T-cell (primary cell): ENCODE measurements at regions of chr7 and their contacts with region 1.

Region 1: GRCh38 chr7:25770670-25771069 is 381.3 kb upstream of the NFE2L3 start:
- DNase-seq: no peak
- ATAC-seq: no peak
- H3K4me3 ChIP-seq: no peak overlapping the region
- H3K4me3 Mint-ChIP-seq: no peak overlapping the region
- H3K27ac ChIP-seq: no peak overlapping the region
- H3K27ac Mint-ChIP-seq: no peak overlapping the region
- H3K4me1 ChIP-seq: no peaks in the 10 kb centered on the region
- H3K4me1 Mint-ChIP-seq: no peaks in the 10 kb centered on the region
- H3K27me3 ChIP-seq: peaks cover 0 to 2% of the 10 kb centered on the region in 2 experiments
- H3K27me3 Mint-ChIP-seq: peaks cover 5 to 9% of the 10 kb centered on the region in 2 donors

Region 2: GRCh38 chr7:25752967-25753791 is 17.5 kb before region 1 on chr7:
- CTCF ChIA-PET with region 1: no interaction called
- POLR2A ChIA-PET with region 1: interaction called in 1 of 2 experiments, 12 read pairs
- DNase-seq: no peak
- ATAC-seq: no peak
- H3K4me3 ChIP-seq: no peak overlapping the region
- H3K4me3 Mint-ChIP-seq: no peak overlapping the region
- H3K27ac ChIP-seq: no peak overlapping the region
- H3K27ac Mint-ChIP-seq: no peak overlapping the region
- H3K4me1 ChIP-seq: no peaks in the 10 kb centered on the region
- H3K4me1 Mint-ChIP-seq: no peaks in the 10 kb centered on the region
- H3K27me3 ChIP-seq: peaks cover 0 to 9% of the 10 kb centered on the region in 2 experiments
- H3K27me3 Mint-ChIP-seq: peaks cover 4 to 5% of the 10 kb centered on the region in 2 donors

Region 3: GRCh38 chr7:25877802-25878789 is 107.4 kb after region 1 on chr7:
- CTCF ChIA-PET with region 1: no interaction called
- POLR2A ChIA-PET with region 1: no interaction called
- DNase-seq: no peak
- ATAC-seq: no peak
- H3K4me3 ChIP-seq: no peak overlapping the region
- H3K4me3 Mint-ChIP-seq: no peak overlapping the region
- H3K27ac ChIP-seq: no peak overlapping the region
- H3K27ac Mint-ChIP-seq: no peak overlapping the region
- H3K4me1 ChIP-seq: no peaks in the 10 kb centered on the region
- H3K4me1 Mint-ChIP-seq: no peaks in the 10 kb centered on the region
- H3K27me3 ChIP-seq: peaks cover 8 to 17% of the 10 kb centered on the region in 2 experiments
- H3K27me3 Mint-ChIP-seq: peaks cover 39 to 41% of the 10 kb centered on the region in 2 donors